AG04449 (cell line): ENCODE measurements at regions of chr7 and their contacts with region 1.

Region 1: DNA sequence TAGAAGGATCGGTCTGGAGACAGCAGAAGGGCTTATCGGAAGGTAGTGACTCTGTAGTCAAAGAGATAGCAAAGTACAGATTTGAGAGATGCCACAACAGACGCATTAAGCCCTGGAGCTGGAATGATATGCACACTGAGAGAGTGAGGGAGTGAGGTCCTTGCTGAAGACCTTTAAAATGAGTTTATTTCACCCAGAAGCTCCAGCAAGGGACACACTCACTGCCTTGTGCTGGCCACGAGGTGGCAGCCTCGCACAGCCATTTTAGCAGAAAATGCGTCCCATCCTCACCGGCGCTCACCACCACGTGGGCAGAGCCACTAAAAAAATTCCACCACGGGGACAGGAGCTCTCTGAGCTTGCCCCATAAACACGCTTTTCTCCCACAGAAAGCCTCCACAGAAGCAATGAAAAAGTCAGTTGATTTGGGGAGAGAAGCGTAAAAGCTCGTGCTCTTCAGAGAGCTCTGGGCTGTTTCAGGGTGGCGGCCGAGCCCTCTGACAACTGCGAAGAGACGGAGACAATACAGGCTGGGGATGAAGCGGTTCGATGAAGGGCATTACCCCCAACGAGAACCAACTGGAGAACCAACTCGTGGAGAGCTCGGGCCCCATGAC is 163.0 kb upstream of the KLF14 start:
- DNase-seq: no peak
- H3K4me3 ChIP-seq: no peak overlapping the region
- CTCF ChIP-seq: peak; percentile 88

Region 2: GRCh38 chr7:130632111-130632510 is 264.9 kb before region 1 on chr7:
- CTCF ChIA-PET with region 1: no interaction called
- POLR2A ChIA-PET with region 1: no interaction called
- DNase-seq: peak; percentile 16
- H3K4me3 ChIP-seq: no peak overlapping the region
- CTCF ChIP-seq: no peak

Region 3: GRCh38 chr7:130831817-130832481 is 65.1 kb before region 1 on chr7:
- CTCF ChIA-PET with region 1: interaction called, 10 read pairs
- POLR2A ChIA-PET with region 1: interaction called, 3 read pairs
- DNase-seq: no peak
- H3K4me3 ChIP-seq: no peak overlapping the region
- CTCF ChIP-seq: peak; percentile 23

Region 4: DNA sequence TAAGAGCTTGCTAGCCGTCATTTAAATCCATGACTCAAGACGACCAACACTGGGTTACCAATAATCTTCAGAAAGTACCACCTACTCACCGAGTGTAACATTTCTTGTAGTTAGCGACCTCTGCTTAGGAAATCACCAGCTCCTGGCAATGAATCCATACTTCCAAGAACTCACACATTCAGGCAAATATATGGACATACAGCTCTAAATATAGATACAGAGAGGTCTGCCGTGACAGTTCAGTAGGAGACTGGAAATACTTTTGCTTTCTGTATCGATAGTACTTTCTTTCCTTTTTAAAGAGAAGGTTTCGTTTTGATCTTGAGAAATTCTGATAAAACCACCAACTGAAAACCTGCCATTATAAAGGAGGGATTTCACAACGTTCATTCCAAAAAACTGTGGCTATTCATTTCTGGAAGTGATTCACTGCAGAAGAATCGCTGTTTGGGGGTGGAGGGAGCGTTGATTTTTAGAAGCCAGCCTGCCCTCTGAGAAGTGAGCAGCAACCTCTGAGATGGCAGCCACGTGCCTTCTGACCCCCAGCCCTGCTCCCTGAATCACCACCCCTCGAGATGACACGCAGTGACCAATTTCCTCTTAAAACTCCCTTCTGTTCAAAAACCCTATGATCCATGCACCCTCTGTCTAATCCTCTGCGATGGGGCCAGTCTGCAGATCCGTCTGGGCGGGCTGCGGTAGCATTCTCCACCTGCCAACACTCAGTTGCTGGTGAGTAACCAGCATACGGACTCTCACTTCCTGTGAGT is 16.0 kb after region 1 on chr7:
- CTCF ChIA-PET with region 1: interaction called, 19 read pairs
- POLR2A ChIA-PET with region 1: interaction called, 7 read pairs
- DNase-seq: peak; percentile 93
- H3K4me3 ChIP-seq: peak overlapping the region; percentile 86
- CTCF ChIP-seq: no peak

Region 5: GRCh38 chr7:130941322-130942210 is 44.6 kb after region 1 on chr7:
- CTCF ChIA-PET with region 1: interaction called, 14 read pairs
- POLR2A ChIA-PET with region 1: interaction called, 3 read pairs
- DNase-seq: no peak
- H3K4me3 ChIP-seq: peak overlapping the region; percentile 43
- CTCF ChIP-seq: no peak

Region 6: DNA sequence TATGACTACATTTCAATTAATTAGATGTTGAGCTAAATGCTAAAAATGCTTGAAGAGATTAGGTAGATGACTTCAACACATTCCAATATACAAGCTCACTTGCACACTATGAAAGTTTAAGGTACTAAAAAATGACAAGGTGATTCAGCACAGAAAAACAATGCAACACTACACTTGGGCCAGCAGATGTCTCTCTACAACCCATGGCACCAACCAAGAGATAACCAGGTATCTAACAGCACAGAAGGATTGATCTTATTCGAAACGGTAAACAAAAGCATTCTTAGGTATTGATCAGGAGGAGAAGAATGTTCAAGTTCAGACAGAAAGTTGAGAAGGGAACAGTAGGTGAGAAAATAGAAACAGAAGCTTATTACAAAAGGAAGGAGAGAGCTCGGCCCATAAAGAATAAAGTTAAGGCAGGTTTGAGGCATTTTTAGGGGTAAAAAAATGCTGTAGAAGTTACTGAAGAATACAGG is 85.2 kb after region 1 on chr7:
- CTCF ChIA-PET with region 1: interaction called, 45 read pairs
- POLR2A ChIA-PET with region 1: no interaction called
- DNase-seq: no peak
- H3K4me3 ChIP-seq: no peak overlapping the region
- CTCF ChIP-seq: peak; percentile 63

Region 7: DNA sequence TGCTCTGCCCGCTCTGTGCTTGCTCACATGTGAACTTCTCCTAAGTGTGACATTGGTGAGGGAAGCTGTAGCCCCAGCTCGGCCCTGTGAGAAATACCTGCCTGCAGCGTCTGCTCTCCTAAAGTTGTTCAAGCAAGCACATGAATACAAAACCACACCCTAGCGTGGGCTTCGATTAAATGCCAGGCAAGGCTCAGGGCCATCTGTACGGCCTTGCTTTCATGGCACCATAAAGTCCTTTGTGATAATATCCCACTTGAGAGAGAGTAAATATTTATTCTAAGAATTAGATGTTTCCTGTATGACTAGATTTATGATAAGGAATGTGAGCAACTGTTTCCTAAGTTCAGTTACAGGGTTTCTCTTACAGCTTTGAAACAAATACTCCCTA is 99.8 kb after region 1 on chr7:
- CTCF ChIA-PET with region 1: interaction called, 38 read pairs
- POLR2A ChIA-PET with region 1: no interaction called
- DNase-seq: no peak
- H3K4me3 ChIP-seq: no peak overlapping the region
- CTCF ChIP-seq: no peak

Region 8: DNA sequence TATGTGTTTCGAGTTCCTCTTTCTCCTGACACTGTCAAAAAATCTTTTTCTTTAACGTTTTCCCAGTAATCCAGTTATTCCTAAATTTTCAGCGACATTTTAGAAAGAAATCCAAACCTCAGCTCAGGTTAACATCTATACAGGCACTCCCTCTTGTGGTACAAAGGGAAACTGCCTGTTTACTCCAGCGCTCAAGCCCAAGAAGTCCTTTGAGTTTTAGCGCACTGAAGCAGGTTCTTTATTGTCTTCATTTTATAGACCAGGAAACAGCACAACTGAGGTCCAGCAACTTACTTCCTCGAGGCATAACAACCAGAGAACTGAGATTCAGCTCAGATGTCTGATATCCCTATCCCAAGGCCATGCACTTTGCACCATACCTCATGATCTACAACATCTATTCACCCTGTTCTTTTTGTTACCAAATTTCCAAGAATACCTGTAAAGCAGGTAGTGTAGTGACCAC is 143.5 kb after region 1 on chr7:
- CTCF ChIA-PET with region 1: interaction called, 62 read pairs
- POLR2A ChIA-PET with region 1: interaction called, 4 read pairs
- DNase-seq: no peak
- H3K4me3 ChIP-seq: no peak overlapping the region
- CTCF ChIP-seq: peak; percentile 75